Activated CD4-positive, alpha-beta memory T cell treated with anti-CD3 and anti-CD28 coated beads for 36 hours (primary cell): ENCODE measurements at regions of chr11 and their contacts with region 1.

Region 1: DNA sequence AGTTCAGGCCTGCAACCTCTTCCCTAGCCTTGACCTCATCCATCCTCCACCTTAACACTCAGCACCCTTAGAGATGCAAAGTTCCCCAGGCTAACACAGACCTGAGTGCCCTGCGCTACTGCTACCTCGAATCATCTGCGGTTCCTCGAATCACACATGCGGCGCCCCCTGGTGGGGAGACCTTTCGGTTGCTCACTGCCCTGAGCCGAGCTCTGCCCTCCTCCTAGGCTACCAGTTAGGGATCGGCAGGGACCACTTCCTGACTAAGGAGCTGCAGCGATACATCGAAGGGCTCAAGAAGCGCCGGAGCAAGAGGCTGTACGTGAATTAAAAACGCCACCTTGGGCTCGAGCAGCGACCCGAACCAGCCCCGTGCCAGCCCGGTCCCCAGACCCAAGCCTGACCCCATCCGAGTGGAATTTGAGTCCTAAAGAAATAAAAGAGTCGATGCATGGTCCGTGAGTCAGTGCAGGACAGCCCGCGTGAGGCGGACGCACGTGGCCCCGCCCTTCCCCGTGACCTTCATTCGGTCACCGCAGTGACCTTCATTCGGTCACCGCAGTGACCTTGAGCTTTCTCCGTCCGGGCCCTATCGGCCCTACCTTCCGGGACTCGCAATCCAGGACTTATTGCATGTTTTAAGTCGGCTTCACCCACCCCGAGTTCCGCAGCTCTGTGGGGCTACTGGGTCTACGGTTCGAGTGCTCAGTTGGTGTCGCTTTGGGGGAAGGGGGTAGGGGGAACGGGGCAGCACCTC is 830 bp upstream of the ESRRA start:
- DNase-seq: peak; percentile 97
- H3K4me3 Mint-ChIP-seq: peak overlapping the region; percentile 80
- H3K27ac Mint-ChIP-seq: peak overlapping the region; percentile 94
- H3K4me1 Mint-ChIP-seq: peaks cover 34% of the 10 kb centered on the region
- H3K27me3 Mint-ChIP-seq: peaks cover 19% of the 10 kb centered on the region

Region 2: DNA sequence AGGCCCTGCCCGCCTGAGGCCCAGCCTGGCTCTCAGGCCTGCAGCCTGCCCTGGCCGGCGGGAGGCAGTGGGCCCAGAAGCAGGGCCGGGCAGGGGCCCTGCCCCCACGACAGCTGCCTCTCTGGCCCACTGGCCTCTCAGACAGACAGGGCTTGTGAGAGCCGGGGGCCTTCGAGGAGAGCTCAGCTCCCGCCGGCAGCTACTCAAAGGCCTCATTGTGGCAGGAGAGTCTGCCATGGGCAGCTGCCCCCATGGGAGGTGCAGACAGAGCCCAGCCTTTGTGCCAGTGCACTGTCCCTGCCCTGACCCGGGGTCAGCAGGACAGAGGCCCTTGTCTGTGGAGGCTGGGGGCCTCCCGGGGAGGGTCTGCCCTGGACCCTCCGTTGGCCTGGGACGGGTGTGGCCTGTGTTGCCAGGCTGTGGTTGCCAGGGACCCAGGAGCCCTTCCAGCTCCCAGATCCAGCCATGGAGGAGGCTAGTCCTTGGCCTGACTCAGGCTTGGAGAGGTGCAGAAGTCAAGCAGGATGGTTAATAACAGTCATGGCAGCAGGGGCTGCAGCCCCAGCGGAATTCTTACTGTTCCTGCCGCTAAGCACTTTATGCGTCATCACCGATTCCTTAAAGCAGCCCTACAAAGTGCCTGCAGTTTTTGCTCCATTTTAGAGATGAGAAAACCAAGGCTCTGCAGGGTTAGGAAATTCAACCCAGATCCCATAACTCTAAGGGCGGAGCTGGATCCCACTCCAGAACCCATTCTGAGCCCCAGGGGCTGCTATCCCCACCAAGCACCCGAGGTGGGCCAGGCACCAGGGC is 256.2 kb before region 1 on chr11:
- CTCF ChIA-PET with region 1: no interaction called
- POLR2A ChIA-PET with region 1: no interaction called
- intact Hi-C with region 1: no loop called
- DNase-seq: no peak
- H3K4me3 Mint-ChIP-seq: no peak overlapping the region
- H3K27ac Mint-ChIP-seq: no peak overlapping the region
- H3K4me1 Mint-ChIP-seq: no peaks in the 10 kb centered on the region
- H3K27me3 Mint-ChIP-seq: no peaks in the 10 kb centered on the region

Region 3: DNA sequence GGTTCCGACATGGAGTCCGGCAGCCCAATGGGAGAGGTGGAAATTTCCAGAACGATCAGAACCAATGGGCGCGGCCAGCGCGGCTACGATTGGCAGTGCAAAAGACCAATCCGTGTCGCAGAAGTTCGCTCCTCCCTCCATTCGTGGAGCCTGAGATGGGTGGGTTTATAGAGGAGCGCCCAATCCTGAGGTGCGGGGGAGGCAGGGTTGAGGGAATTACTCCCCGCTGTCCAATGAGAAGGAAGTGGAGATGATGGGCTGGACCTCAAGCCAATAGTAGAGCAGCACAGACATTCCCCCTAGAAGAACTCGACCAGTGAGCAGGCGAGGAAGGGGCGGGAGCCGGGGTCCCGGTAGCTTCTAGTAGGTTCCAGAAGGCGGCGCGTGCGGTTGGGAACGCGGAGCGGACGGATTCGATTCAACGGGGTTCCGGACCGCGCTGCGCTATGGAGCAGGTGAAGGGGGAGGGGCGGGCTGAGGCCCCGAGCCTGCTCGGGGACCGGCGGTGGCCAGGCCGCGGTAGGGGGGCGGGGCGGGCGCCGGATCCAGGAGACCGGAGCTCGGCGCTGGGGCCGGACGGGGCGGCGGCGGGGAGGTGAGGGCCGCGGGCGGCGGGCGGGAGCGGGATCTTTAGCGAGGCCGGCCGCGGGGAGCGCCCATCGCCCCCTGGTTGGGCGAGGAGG is 118.5 kb before region 1 on chr11 and contains the start of gene STIP1:
- CTCF ChIA-PET with region 1: interaction called, 7 read pairs
- POLR2A ChIA-PET with region 1: no interaction called
- intact Hi-C with region 1: loop called (anchors 1 kb)
- DNase-seq: peak; percentile 99
- H3K4me3 Mint-ChIP-seq: peak within 1 kb of the TSS; percentile 91
- H3K27ac Mint-ChIP-seq: peak within 1 kb of the TSS; percentile 96
- H3K4me1 Mint-ChIP-seq: peaks cover 42% of the 10 kb centered on the region
- H3K27me3 Mint-ChIP-seq: no peaks in the 10 kb centered on the region
- total RNA-seq, gene STIP1: 402 to 413 TPM

Region 4: GRCh38 chr11:64225612-64226506 is 78.6 kb before region 1 on chr11 and contains the starts of genes NUDT22 and TRPT1:
- CTCF ChIA-PET with region 1: interaction called, 15 read pairs
- POLR2A ChIA-PET with region 1: interaction called, 3 read pairs
- intact Hi-C with region 1: no loop called
- DNase-seq: peak; percentile 95
- H3K4me3 Mint-ChIP-seq: peak within 1 kb of the TSS; percentile 88
- H3K27ac Mint-ChIP-seq: peak within 1 kb of the TSS; percentile 84
- H3K4me1 Mint-ChIP-seq: peaks cover 28% of the 10 kb centered on the region
- H3K27me3 Mint-ChIP-seq: no peaks in the 10 kb centered on the region
- total RNA-seq, gene NUDT22: 69.8 to 79.8 TPM
- total RNA-seq, gene TRPT1: 30.4 to 35.6 TPM

Region 5: GRCh38 chr11:64246871-64247728 is 57.4 kb before region 1 on chr11 and contains the start of gene PPP1R14B:
- CTCF ChIA-PET with region 1: interaction called, 29 read pairs
- POLR2A ChIA-PET with region 1: interaction called, 6 read pairs
- intact Hi-C with region 1: loop called (anchors 1 kb)
- DNase-seq: peak; percentile 88
- H3K4me3 Mint-ChIP-seq: peak within 1 kb of the TSS; percentile 91
- H3K27ac Mint-ChIP-seq: peak within 1 kb of the TSS; percentile 90
- H3K4me1 Mint-ChIP-seq: peaks cover 36% of the 10 kb centered on the region
- H3K27me3 Mint-ChIP-seq: no peaks in the 10 kb centered on the region
- total RNA-seq, gene PPP1R14B: 238 to 242 TPM

Region 6: GRCh38 chr11:64269380-64270234 is 34.9 kb before region 1 on chr11:
- CTCF ChIA-PET with region 1: interaction called, 46 read pairs
- POLR2A ChIA-PET with region 1: interaction called, 6 read pairs
- intact Hi-C with region 1: loop called (anchors 1 kb)
- DNase-seq: peak; percentile 99
- H3K4me3 Mint-ChIP-seq: peak overlapping the region; percentile 89
- H3K27ac Mint-ChIP-seq: peak overlapping the region; percentile 95
- H3K4me1 Mint-ChIP-seq: peaks cover 15% of the 10 kb centered on the region
- H3K27me3 Mint-ChIP-seq: no peaks in the 10 kb centered on the region

Region 7: GRCh38 chr11:64291752-64292459 is 12.6 kb before region 1 on chr11:
- CTCF ChIA-PET with region 1: interaction called, 74 read pairs
- POLR2A ChIA-PET with region 1: interaction called, 5 read pairs
- intact Hi-C with region 1: no loop called
- DNase-seq: no peak
- H3K4me3 Mint-ChIP-seq: no peak overlapping the region
- H3K27ac Mint-ChIP-seq: no peak overlapping the region
- H3K4me1 Mint-ChIP-seq: peaks cover 7% of the 10 kb centered on the region
- H3K27me3 Mint-ChIP-seq: peaks cover 47% of the 10 kb centered on the region

Region 8: GRCh38 chr11:64341851-64342791 is 37.6 kb after region 1 on chr11:
- CTCF ChIA-PET with region 1: no interaction called
- POLR2A ChIA-PET with region 1: no interaction called
- intact Hi-C with region 1: loop called (anchors 1 kb)
- DNase-seq: peak; percentile 96
- H3K4me3 Mint-ChIP-seq: peak overlapping the region; percentile 37
- H3K27ac Mint-ChIP-seq: no peak overlapping the region
- H3K4me1 Mint-ChIP-seq: peaks cover 42% of the 10 kb centered on the region
- H3K27me3 Mint-ChIP-seq: no peaks in the 10 kb centered on the region